H1 (cell line): ENCODE measurements at regions of chr13 and their contacts with region 1.

Region 1: DNA sequence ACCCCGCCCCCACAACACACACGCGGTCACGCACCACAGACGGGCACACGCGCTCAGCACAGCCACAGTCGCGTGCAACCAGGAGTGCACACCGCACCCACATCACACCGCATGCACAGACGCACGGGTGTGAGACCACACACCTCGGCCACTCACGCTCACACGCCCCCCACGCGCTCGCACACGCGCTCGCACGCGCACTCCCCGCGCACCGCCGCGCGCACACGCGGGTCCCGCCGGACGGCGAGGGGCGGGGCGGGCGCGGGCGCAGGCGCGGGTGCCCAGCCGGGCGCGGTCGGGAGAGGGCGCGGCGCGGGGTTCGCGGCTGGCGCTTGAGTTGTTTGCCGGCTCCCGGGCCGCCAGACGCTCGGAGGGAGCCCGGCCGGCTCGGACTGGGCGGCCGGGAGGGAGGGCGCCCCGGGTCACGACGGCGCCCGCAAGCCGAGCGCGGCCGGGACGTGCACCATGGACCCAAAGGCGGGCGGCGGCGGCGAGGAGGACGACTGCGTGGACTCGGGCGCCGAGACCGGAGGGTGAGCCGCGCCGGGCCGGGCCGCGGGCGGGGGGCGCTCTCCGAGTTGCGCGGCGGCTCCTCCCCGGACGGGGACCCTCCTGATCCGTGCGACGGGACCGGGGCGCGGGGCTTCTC is at the start of gene FAM124A:
- DNase-seq: peak in 1 of 2 experiments; percentile 80
- H3K4me3 ChIP-seq: peak within 1 kb of the TSS; percentile 80 to 96 (median 89)
- H3K27ac ChIP-seq: peak within 1 kb of the TSS; percentile 24; the same call in 1 of the 2 replicates
- H3K4me1 ChIP-seq: peaks cover 6 to 23% (median 22%) of the 10 kb centered on the region in 4 experiments
- H3K27me3 ChIP-seq: no peaks in the 10 kb centered on the region
- CTCF ChIP-seq: peak; percentile 10 to 71 (median 46); a peak in 3 of 4 replicates
- EP300 ChIP-seq: no peak
- POLR2A ChIP-seq: peak in 1 of 2 experiments; percentile 42; a peak in 2 of 3 replicates
- RAD21 ChIP-seq: peak in 1 of 2 experiments; percentile 43; a peak in 2 of 4 replicates
- total RNA-seq, gene FAM124A: 47.1 and 49.9 TPM in 2 replicates

Region 2: GRCh38 chr13:51235756-51236490 is 13.8 kb after region 1 on chr13:
- CTCF ChIA-PET with region 1: interaction called, 31 read pairs
- POLR2A ChIA-PET with region 1: interaction called, 77 read pairs
- DNase-seq: no peak
- H3K4me3 ChIP-seq: no peak overlapping the region
- H3K27ac ChIP-seq: peak overlapping the region; percentile 32; the same call in 1 of the 2 replicates
- H3K4me1 ChIP-seq: peaks cover 5 to 13% (median 7%) of the 10 kb centered on the region in 4 experiments; a peak in 5 of 7 replicates
- H3K27me3 ChIP-seq: no peaks in the 10 kb centered on the region
- CTCF ChIP-seq: no peak
- EP300 ChIP-seq: no peak
- POLR2A ChIP-seq: no peak
- RAD21 ChIP-seq: no peak

Region 3: DNA sequence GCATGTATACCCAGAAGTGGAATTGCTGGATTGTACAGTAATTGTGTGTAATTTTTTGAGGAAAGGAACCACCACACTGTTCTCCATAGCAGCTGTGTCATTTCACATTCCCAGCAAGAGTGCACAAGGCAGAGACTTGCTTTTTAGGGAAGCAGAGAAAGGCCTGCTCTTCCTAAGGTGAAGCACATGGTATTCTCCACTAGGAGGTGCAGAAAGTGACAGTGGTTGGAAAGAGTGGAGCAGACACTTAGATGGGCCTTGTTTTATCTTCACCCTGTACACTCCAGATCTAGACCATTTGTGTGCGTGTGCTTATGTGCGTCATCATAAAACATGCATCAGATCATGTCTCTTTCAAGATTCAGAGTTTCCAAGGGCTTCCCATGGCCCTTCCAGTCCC is 35.0 kb after region 1 on chr13:
- CTCF ChIA-PET with region 1: interaction called, 11 read pairs
- POLR2A ChIA-PET with region 1: interaction called, 8 read pairs
- DNase-seq: no peak
- H3K4me3 ChIP-seq: no peak overlapping the region
- H3K27ac ChIP-seq: no peak overlapping the region
- H3K4me1 ChIP-seq: peaks cover 12 to 25% (median 22%) of the 10 kb centered on the region in 4 experiments
- H3K27me3 ChIP-seq: no peaks in the 10 kb centered on the region
- CTCF ChIP-seq: peak in 2 of 3 experiments; percentile 21 to 52; a peak in 1 of 4 replicates
- EP300 ChIP-seq: no peak
- POLR2A ChIP-seq: no peak
- RAD21 ChIP-seq: peak; percentile 16 to 34; a peak in 1 of 4 replicates